Transverse colon (tissue), 4 donors: ENCODE measurements at regions of chr10 and their contacts with region 1.

Region 1: GRCh38 chr10:116961406-116962251 is 43.4 kb downstream of the SHTN1 start:
- DNase-seq: no peak
- H3K4me3 ChIP-seq: no peak overlapping the region
- H3K27ac ChIP-seq: no peak overlapping the region
- H3K4me1 ChIP-seq: no peaks in the 10 kb centered on the region
- H3K27me3 ChIP-seq: no peaks in the 10 kb centered on the region
- CTCF ChIP-seq: no peak
- EP300 ChIP-seq: no peak
- POLR2A ChIP-seq: no peak

Region 2: GRCh38 chr10:118259288-118259906 is 1297.8 kb after region 1 on chr10:
- in situ Hi-C with region 1: no loop called
- intact Hi-C with region 1: loop called (anchors 5 kb)
- DNase-seq: peak; percentile 47
- H3K4me3 ChIP-seq: no peak overlapping the region
- H3K27ac ChIP-seq: no peak overlapping the region
- H3K4me1 ChIP-seq: no peaks in the 10 kb centered on the region
- H3K27me3 ChIP-seq: peaks cover 6% of the 10 kb centered on the region
- CTCF ChIP-seq: peak; percentile 44 to 60 (median 51)
- EP300 ChIP-seq: no peak
- POLR2A ChIP-seq: no peak